HCT116 (cell line): ENCODE measurements at regions of chr10 and their contacts with region 1.

Region 1: DNA sequence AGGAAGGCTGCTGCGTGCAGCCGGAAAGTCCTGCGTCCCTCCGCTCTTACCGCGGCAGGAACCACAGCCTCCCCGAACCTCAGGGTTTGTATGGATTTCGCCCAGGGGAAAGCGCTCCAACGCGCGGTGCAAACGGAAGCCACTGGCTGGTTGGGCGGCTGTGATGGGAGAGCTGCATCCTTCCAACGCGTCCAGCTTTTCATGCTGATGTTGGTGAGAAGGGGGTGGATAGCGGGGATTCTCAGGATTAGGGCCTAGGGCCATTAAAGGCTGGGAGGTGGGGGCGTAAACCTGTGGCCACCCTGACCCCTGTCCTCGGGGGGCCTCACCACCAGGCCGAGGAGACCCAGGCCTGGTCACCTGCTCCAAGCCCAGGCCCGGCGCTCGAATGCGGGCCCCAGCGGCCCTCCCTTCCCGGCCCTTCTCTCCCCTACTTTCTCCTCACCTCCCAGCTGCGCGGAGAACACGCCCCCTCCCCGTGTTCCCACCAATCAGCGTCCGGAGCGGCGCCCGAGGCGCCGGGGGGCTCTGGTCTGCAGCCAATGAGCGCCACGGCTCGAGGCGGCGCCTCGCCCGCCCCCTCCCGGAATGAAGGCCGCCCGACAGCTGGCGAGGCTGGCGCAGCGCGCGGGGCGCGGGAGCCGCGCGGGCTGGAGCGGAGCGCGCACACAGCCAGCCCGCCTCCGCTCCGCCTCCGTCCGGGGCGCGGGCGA is 458 bp upstream of the NANOS1 start:
- DNase-seq: peak; percentile 85
- ATAC-seq: peak; percentile 82
- H3K4me3 ChIP-seq: peak overlapping the region; percentile 17 to 32; a peak in 3 of 4 replicates
- H3K27ac ChIP-seq: no peak overlapping the region
- H3K4me1 ChIP-seq: peaks cover 20 to 49% of the 10 kb centered on the region in 2 experiments
- H3K27me3 ChIP-seq: no peaks in the 10 kb centered on the region
- CTCF ChIP-seq: 0 out of 6 replicates have a peak, but pooled peaks of 1 of the 3 experiments have one; percentile 23
- POLR2A ChIP-seq: no peak
- RAD21 ChIP-seq: no peak

Region 2: GRCh38 chr10:119049361-119049760 is 20.3 kb after region 1 on chr10:
- CTCF ChIA-PET with region 1: no interaction called
- POLR2A ChIA-PET with region 1: no interaction called
- RAD21 ChIA-PET with region 1: no interaction called
- intact Hi-C with region 1: loop called (anchors 1 kb)
- DNase-seq: no peak
- ATAC-seq: no peak
- H3K4me3 ChIP-seq: no peak overlapping the region
- H3K27ac ChIP-seq: no peak overlapping the region
- H3K4me1 ChIP-seq: no peaks in the 10 kb centered on the region
- H3K27me3 ChIP-seq: no peaks in the 10 kb centered on the region
- CTCF ChIP-seq: no peak
- POLR2A ChIP-seq: no peak
- RAD21 ChIP-seq: no peak